ENCODE measurements at regions of chr1 and their contacts with region 1.

Region 1: GRCh38 chr1:15272009-15272788 is 25.2 kb downstream of the FHAD1 start:
- DNase-seq: peak; percentile 71 to 86 (median 83)
- H3K4me3 ChIP-seq: no peak overlapping the region
- H3K4me3 Mint-ChIP-seq: peak overlapping the region in 1 of 2 donors; percentile 78
- H3K27ac ChIP-seq: no peak overlapping the region
- H3K27ac Mint-ChIP-seq: no peak overlapping the region
- H3K4me1 ChIP-seq: peaks cover 21 to 22% of the 10 kb centered on the region in 2 donors
- H3K4me1 Mint-ChIP-seq: peaks cover 21% of the 10 kb centered on the region
- H3K27me3 ChIP-seq: no peaks in the 10 kb centered on the region
- H3K27me3 Mint-ChIP-seq: peaks cover 2 to 3% (median 3%) of the 10 kb centered on the region in 3 donors
- CTCF ChIP-seq: peak; percentile 79

Region 2: GRCh38 chr1:14778898-14779865 is 493.0 kb before region 1 on chr1:
- intact Hi-C with region 1: no loop called
- DNase-seq: peak in 2 of 3 donors; percentile 2 to 15
- H3K4me3 ChIP-seq: no peak overlapping the region
- H3K4me3 Mint-ChIP-seq: no peak overlapping the region
- H3K27ac ChIP-seq: no peak overlapping the region
- H3K27ac Mint-ChIP-seq: no peak overlapping the region
- H3K4me1 ChIP-seq: peaks cover 41 to 49% of the 10 kb centered on the region in 2 donors
- H3K4me1 Mint-ChIP-seq: peaks cover 71% of the 10 kb centered on the region
- H3K27me3 ChIP-seq: no peaks in the 10 kb centered on the region
- H3K27me3 Mint-ChIP-seq: no peaks in the 10 kb centered on the region
- CTCF ChIP-seq: peak; percentile 76

Region 3: DNA sequence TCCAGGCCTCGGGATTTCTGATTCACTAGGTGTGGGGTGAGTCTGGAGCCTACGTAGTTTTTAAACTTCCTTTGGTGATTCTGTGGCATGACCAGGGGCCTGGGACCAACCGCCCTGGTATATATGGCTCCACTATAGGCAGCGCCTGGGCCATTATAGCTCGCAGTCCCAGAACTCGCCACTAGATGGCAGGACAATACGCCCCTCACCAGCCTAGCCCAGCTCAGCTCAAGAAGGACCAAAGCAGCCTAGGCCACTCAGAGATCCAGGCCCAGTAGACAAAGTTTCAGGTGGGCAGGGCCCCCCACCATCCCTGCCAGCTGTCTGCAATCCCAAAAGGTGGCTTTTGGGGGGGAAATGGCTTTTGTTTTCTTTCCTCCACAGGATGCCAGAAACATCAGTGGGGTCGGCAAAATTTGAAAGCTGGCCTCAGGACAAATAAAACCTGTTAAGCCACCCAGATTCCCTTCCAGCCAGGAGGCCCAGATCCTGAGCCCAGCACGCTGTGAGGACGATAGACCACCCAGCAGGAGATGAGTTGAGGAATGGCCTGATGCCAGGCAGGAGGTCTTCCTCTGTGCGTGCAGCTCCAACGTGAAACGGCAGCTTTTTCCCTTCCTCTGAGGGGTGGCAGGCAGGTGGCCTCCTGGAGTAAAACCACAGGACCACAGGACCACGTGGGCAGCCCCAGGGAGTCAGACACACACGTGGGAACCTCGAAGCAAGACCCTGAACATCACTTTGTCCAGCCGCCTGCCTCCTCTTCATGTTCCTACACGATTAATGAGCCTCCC is 143.5 kb before region 1 on chr1:
- intact Hi-C with region 1: loop called (anchors 2 kb)
- DNase-seq: peak; percentile 66 to 79 (median 77)
- H3K4me3 ChIP-seq: no peak overlapping the region
- H3K4me3 Mint-ChIP-seq: no peak overlapping the region
- H3K27ac ChIP-seq: no peak overlapping the region
- H3K27ac Mint-ChIP-seq: no peak overlapping the region
- H3K4me1 ChIP-seq: no peaks in the 10 kb centered on the region
- H3K4me1 Mint-ChIP-seq: no peaks in the 10 kb centered on the region
- H3K27me3 ChIP-seq: no peaks in the 10 kb centered on the region
- H3K27me3 Mint-ChIP-seq: peaks cover 2 to 4% (median 3%) of the 10 kb centered on the region in 3 donors
- CTCF ChIP-seq: peak; percentile 85

Region 4: GRCh38 chr1:15152318-15153183 is 119.6 kb before region 1 on chr1:
- intact Hi-C with region 1: loop called (anchors 2 to 5 kb)
- DNase-seq: peak; percentile 53 to 75 (median 70)
- H3K4me3 ChIP-seq: peak overlapping the region; percentile 17 to 74 (median 44)
- H3K4me3 Mint-ChIP-seq: peak overlapping the region; percentile 83 to 94
- H3K27ac ChIP-seq: peak overlapping the region in 1 of 2 donors; percentile 29
- H3K27ac Mint-ChIP-seq: peak overlapping the region in 2 of 7 donors; percentile 50 to 77
- H3K4me1 ChIP-seq: peaks cover 34% of the 10 kb centered on the region in 2 donors
- H3K4me1 Mint-ChIP-seq: peaks cover 32% of the 10 kb centered on the region
- H3K27me3 ChIP-seq: peaks cover 15 to 16% of the 10 kb centered on the region in 2 donors
- H3K27me3 Mint-ChIP-seq: peaks cover 51 to 57% (median 53%) of the 10 kb centered on the region in 3 donors
- CTCF ChIP-seq: peak; percentile 38

Region 5: DNA sequence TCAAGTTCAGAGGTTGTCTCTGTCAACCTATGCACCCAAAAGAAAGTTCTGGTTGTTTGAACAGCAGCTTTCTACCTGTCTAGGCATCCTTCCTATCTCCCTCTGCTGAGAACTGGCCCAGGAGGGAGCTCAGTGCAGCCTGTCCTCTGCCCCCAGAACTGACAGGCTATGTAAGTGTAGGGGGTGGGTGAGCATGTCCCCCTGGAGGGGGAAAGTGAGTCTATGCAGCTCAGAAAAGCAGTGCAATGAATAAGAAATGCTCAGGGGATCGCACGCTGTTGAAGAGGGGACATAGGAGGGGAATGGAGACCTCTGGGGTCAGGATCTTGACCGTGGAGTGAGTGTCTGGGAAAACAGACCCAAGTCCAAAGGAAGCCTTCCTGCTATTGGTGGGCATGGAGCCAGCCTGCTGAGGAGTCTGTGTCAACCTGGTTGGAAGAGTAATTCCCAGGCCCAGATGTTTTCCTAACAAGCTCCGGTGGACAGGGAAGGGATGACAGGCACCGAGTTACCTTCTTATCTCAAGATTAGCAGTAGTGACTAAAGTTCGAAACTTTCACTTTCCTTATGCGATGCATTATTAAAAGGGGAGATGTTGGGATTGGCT is 51.3 kb before region 1 on chr1:
- intact Hi-C with region 1: no loop called
- DNase-seq: no peak
- H3K4me3 ChIP-seq: no peak overlapping the region
- H3K4me3 Mint-ChIP-seq: no peak overlapping the region
- H3K27ac ChIP-seq: no peak overlapping the region
- H3K27ac Mint-ChIP-seq: peak overlapping the region in 4 of 7 donors; percentile 16 to 69 (median 54)
- H3K4me1 ChIP-seq: peaks cover 31 to 33% of the 10 kb centered on the region in 2 donors
- H3K4me1 Mint-ChIP-seq: peaks cover 39% of the 10 kb centered on the region
- H3K27me3 ChIP-seq: no peaks in the 10 kb centered on the region
- H3K27me3 Mint-ChIP-seq: peaks cover 0 to 9% (median 3%) of the 10 kb centered on the region in 3 donors
- CTCF ChIP-seq: no peak

Region 6: GRCh38 chr1:15251857-15252835 is 20.1 kb before region 1 on chr1:
- intact Hi-C with region 1: loop called in 1 of 2 experiments (anchors 2 kb)
- DNase-seq: no peak
- H3K4me3 ChIP-seq: no peak overlapping the region
- H3K4me3 Mint-ChIP-seq: no peak overlapping the region
- H3K27ac ChIP-seq: no peak overlapping the region
- H3K27ac Mint-ChIP-seq: no peak overlapping the region
- H3K4me1 ChIP-seq: peaks cover 17 to 22% of the 10 kb centered on the region in 2 donors
- H3K4me1 Mint-ChIP-seq: peaks cover 25% of the 10 kb centered on the region
- H3K27me3 ChIP-seq: peaks cover 3 to 5% of the 10 kb centered on the region in 2 donors
- H3K27me3 Mint-ChIP-seq: peaks cover 15 to 30% (median 18%) of the 10 kb centered on the region in 3 donors
- CTCF ChIP-seq: no peak